CD4-positive, alpha-beta T cell (primary cell): ENCODE measurements at regions of chr9 and their contacts with region 1.

Region 1: DNA sequence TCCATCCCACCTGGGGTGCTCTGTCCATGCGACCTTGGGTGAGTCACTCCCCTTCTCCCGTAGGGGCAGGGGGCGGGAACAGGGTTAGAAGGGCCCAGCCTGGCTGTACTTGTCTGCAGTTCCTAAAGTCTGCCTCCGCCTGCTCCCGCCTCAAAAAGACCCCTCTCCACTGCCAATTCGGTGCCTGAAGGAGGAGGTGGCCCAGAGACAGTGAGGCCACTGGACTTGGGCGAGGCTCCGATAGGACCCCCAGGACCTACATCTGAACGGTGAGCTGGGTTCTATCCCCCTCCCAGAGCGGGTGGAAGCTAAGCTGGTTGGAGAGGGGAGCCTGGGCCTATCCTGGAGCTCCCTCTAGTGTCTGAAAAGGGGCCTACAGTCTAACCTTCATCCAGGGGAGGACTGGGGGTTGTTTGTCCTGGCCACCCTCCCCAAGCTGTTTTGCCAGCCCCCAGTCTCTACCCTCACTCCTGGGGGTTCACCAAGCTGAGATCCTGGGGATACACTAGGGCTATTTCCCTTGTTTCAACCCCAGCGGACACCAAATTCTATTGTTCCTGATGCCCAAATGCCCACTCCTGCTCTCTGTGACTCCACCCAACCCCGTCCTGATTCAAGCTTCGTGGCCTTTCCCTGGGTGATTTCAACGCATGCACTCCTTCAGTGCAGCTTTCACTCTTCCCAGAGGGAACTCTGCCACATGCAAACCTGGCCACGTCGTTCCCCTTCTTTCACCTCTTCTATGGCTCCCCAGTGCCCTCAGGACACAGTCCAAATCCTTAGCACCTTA is 6.1 kb upstream of the CRB2 start:
- DNase-seq: peak; percentile 44 to 80 (median 57)
- ATAC-seq: peak; percentile 89
- H3K4me3 ChIP-seq: no peak overlapping the region
- H3K4me3 Mint-ChIP-seq: no peak overlapping the region
- H3K27ac ChIP-seq: no peak overlapping the region
- H3K27ac Mint-ChIP-seq: no peak overlapping the region
- H3K4me1 ChIP-seq: peaks cover 12% of the 10 kb centered on the region
- H3K4me1 Mint-ChIP-seq: peaks cover 5% of the 10 kb centered on the region
- H3K27me3 ChIP-seq: no peaks in the 10 kb centered on the region
- H3K27me3 Mint-ChIP-seq: no peaks in the 10 kb centered on the region
- CTCF ChIP-seq: peak; percentile 94

Region 2: GRCh38 chr9:122996586-122996985 is 353.3 kb before region 1 on chr9:
- CTCF ChIA-PET with region 1: no interaction called
- POLR2A ChIA-PET with region 1: no interaction called
- intact Hi-C with region 1: loop called in 1 of 2 experiments (anchors 5 kb)
- DNase-seq: no peak
- ATAC-seq: no peak
- H3K4me3 ChIP-seq: no peak overlapping the region
- H3K4me3 Mint-ChIP-seq: no peak overlapping the region
- H3K27ac ChIP-seq: no peak overlapping the region
- H3K27ac Mint-ChIP-seq: no peak overlapping the region
- H3K4me1 ChIP-seq: no peaks in the 10 kb centered on the region
- H3K4me1 Mint-ChIP-seq: peaks cover 5% of the 10 kb centered on the region
- H3K27me3 ChIP-seq: no peaks in the 10 kb centered on the region
- H3K27me3 Mint-ChIP-seq: no peaks in the 10 kb centered on the region
- CTCF ChIP-seq: no peak

Region 3: DNA sequence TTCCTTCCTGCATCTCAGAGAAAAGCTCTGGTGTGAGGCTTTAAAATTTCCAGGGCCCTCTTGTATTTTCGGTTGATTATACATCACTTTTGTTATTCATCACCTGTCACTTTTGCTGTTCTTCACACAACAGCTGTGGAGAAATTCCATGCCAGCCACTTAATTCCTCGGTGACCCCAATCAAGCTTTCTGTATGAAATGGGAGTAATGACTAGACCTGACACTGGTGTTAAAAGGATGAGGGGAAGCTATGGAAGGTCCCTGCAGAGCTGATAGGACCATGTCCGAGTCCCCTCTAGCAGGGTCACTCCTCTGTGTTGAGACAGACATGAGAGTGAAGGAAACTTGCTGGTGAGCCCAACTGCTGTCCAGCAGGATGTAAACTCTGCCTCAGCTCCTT is 256.7 kb before region 1 on chr9:
- CTCF ChIA-PET with region 1: interaction called, 10 read pairs
- POLR2A ChIA-PET with region 1: no interaction called
- intact Hi-C with region 1: no loop called
- DNase-seq: no peak
- ATAC-seq: no peak
- H3K4me3 ChIP-seq: no peak overlapping the region
- H3K4me3 Mint-ChIP-seq: no peak overlapping the region
- H3K27ac ChIP-seq: no peak overlapping the region
- H3K27ac Mint-ChIP-seq: no peak overlapping the region
- H3K4me1 ChIP-seq: no peaks in the 10 kb centered on the region
- H3K4me1 Mint-ChIP-seq: no peaks in the 10 kb centered on the region
- H3K27me3 ChIP-seq: no peaks in the 10 kb centered on the region
- H3K27me3 Mint-ChIP-seq: no peaks in the 10 kb centered on the region
- CTCF ChIP-seq: no peak

Region 4: DNA sequence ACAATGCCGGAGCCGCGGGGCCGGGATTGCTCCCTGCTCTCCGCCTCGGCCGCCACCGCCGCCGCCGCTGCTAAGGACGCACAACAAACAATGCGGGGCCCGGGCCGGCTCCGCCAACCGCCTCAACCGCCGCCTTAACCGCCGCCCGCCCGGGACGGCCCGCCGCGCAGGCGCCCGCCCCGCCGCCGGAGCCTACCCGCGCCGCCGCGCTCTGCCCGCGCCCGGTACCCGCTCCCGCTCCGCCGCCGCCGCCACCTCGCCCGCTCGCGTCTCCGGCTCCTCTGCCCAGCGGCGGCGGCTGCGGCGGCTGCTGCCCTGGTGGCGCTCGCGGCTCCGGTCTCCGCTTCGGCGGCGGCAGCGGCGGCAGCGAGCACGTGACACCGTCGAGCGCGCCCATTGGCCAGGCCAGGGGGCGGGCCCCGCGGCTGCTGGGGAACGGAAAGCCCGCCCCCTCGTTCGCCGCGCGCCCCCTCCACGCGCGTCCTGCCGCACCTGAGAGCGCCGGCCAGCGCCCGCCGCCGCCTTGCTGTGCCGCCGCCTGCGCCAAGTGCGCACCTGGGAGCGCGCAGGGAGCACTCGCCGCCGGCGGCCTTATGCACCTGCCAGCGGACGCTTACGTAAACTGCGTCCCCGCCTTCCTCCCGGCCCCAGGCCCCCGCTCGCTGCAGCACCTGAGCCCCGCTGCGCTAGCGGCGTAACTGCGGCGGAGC is 81.5 kb before region 1 on chr9 and contains the start of gene STRBP:
- CTCF ChIA-PET with region 1: interaction called, 5 read pairs
- POLR2A ChIA-PET with region 1: interaction called, 12 read pairs
- intact Hi-C with region 1: no loop called
- DNase-seq: peak; percentile 85 to 98 (median 94)
- ATAC-seq: peak; percentile 88
- H3K4me3 ChIP-seq: peak within 1 kb of the TSS; percentile 76
- H3K4me3 Mint-ChIP-seq: peak within 1 kb of the TSS; percentile 89
- H3K27ac ChIP-seq: peak within 1 kb of the TSS; percentile 62 to 84
- H3K27ac Mint-ChIP-seq: peak within 1 kb of the TSS; percentile 73
- H3K4me1 ChIP-seq: peaks cover 30% of the 10 kb centered on the region
- H3K4me1 Mint-ChIP-seq: peaks cover 35% of the 10 kb centered on the region
- H3K27me3 ChIP-seq: no peaks in the 10 kb centered on the region
- H3K27me3 Mint-ChIP-seq: no peaks in the 10 kb centered on the region
- CTCF ChIP-seq: no peak
- total RNA-seq, gene STRBP: 10.9 to 12.0 TPM

Region 5: DNA sequence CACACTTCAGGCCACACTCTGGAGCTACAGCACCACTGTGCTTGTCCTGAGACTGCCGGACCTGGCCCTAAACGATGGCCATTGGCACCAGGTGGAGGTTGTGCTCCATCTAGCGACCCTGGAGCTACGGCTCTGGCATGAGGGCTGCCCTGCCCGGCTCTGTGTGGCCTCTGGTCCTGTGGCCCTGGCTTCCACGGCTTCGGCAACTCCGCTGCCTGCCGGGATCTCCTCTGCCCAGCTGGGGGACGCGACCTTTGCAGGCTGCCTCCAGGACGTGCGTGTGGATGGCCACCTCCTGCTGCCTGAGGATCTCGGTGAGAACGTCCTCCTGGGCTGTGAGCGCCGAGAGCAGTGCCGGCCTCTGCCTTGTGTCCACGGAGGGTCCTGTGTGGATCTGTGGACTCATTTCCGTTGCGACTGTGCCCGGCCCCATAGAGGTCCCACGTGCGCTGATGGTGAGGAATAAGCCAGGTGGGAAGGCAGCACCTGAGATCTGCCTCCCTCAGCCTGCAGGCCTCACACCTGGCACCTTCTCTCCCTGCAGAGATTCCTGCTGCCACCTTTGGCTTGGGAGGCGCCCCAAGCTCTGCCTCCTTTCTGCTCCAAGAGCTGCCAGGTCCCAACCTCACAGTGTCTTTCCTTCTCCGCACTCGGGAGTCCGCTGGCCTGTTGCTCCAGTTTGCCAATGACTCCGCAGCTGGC is 20.8 kb after region 1 on chr9:
- CTCF ChIA-PET with region 1: no interaction called
- POLR2A ChIA-PET with region 1: no interaction called
- intact Hi-C with region 1: no loop called
- DNase-seq: no peak
- ATAC-seq: no peak
- H3K4me3 ChIP-seq: no peak overlapping the region
- H3K4me3 Mint-ChIP-seq: no peak overlapping the region
- H3K27ac ChIP-seq: no peak overlapping the region
- H3K27ac Mint-ChIP-seq: no peak overlapping the region
- H3K4me1 ChIP-seq: peaks cover 3% of the 10 kb centered on the region
- H3K4me1 Mint-ChIP-seq: no peaks in the 10 kb centered on the region
- H3K27me3 ChIP-seq: peaks cover 27 to 35% of the 10 kb centered on the region in 2 experiments
- H3K27me3 Mint-ChIP-seq: peaks cover 46% of the 10 kb centered on the region
- CTCF ChIP-seq: no peak

Region 6: GRCh38 chr9:123389070-123389469 is 39.2 kb after region 1 on chr9:
- CTCF ChIA-PET with region 1: interaction called, 3 read pairs
- POLR2A ChIA-PET with region 1: no interaction called
- intact Hi-C with region 1: loop called in 1 of 2 experiments (anchors 1 kb)
- DNase-seq: no peak
- ATAC-seq: no peak
- H3K4me3 ChIP-seq: no peak overlapping the region
- H3K4me3 Mint-ChIP-seq: no peak overlapping the region
- H3K27ac ChIP-seq: no peak overlapping the region
- H3K27ac Mint-ChIP-seq: no peak overlapping the region
- H3K4me1 ChIP-seq: no peaks in the 10 kb centered on the region
- H3K4me1 Mint-ChIP-seq: no peaks in the 10 kb centered on the region
- H3K27me3 ChIP-seq: no peaks in the 10 kb centered on the region
- H3K27me3 Mint-ChIP-seq: no peaks in the 10 kb centered on the region
- CTCF ChIP-seq: no peak